Heart left ventricle (tissue), 16 donors: ENCODE measurements at regions of chr11 and their contacts with region 1.

Region 1: DNA sequence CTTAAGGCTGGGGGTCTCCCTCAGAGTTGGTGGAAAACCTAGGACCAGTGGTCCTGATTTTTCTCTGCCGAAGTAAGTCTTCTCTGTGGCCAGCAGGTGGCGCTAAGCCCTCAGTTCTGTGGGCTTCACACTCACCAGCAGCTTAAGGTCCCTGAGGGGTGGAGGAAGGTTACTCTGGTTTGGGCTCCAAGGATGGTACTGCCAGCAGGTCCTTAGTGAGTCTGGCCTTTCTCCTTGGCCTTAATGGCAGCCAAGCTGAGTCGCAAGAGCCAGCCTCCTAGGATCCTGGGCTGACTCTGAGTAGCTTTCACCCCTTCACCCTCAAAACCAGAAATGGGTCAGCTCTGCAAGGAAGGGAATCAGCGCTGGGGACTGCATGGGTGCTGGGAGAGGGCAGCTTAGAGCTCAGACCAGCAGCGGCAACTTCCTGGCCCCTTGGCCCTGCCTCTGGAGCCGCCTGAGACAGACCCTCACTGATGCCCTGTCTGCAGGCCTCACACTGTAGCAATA is 4.4 kb downstream of the KCNJ11 start:
- DNase-seq: peak; percentile 76 to 90 (median 84)
- ATAC-seq: peak in 3 of 4 donors; percentile 23 to 49 (median 48)
- H3K4me3 ChIP-seq: no peak overlapping the region
- H3K27ac ChIP-seq: no peak overlapping the region
- H3K4me1 ChIP-seq: peaks cover 0 to 31% (median 7%) of the 10 kb centered on the region in 12 donors
- H3K27me3 ChIP-seq: peaks cover 0 to 15% (median 0%) of the 10 kb centered on the region in 9 donors
- CTCF ChIP-seq: peak; percentile 84 to 95 (median 90)
- POLR2A ChIP-seq: no peak

Region 2: GRCh38 chr11:17230867-17231851 is 152.9 kb before region 1 on chr11:
- intact Hi-C with region 1: loop called in 1 of 10 experiments (anchors 5 kb)
- DNase-seq: no peak
- ATAC-seq: no peak
- H3K4me3 ChIP-seq: no peak overlapping the region
- H3K27ac ChIP-seq: no peak overlapping the region
- H3K4me1 ChIP-seq: peaks cover 0 to 7% (median 0%) of the 10 kb centered on the region in 12 donors
- H3K27me3 ChIP-seq: no peaks in the 10 kb centered on the region
- CTCF ChIP-seq: no peak
- POLR2A ChIP-seq: no peak

Region 3: GRCh38 chr11:17343907-17344306 is 40.1 kb before region 1 on chr11:
- intact Hi-C with region 1: no loop called
- DNase-seq: no peak
- ATAC-seq: no peak
- H3K4me3 ChIP-seq: no peak overlapping the region
- H3K27ac ChIP-seq: no peak overlapping the region
- H3K4me1 ChIP-seq: no peaks in the 10 kb centered on the region
- H3K27me3 ChIP-seq: no peaks in the 10 kb centered on the region
- CTCF ChIP-seq: no peak
- POLR2A ChIP-seq: no peak

Region 4: DNA sequence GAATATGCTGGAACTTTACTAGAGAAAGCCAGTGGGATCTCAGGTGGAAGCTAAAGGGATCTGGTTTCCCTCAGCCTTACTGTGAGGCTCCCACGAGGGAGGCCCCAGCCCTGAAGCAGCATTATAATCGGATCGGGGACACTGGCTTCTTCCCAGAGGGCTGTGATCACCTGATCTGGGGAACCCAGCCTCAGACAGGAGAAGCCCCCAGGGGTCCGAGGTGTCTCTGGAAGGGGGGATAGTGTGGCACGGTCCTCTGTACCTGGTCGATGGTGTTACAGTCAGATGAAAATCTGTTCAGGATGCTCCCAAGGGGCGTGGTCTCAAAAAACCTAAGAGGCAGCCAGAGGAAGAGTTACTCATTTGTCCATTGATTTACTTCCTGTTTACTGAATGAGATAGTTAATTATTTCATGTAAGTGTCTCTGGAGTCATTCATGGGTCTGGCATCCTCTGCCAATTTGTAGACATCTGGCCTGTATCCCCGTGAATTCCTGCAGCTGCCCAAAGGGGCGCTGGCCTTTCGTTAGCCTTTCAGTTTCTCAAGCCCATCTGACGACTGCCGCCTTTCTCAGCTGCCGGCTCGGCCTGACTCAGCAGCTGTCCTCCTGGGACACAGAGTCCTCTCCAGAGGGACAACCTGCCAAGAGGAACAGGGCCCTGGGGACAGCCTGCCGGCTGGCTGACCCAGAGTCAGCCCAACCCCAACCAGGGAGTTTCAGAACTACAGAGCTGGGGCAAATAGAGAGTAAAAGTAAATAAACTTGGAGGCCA is 21.4 kb after region 1 on chr11:
- intact Hi-C with region 1: loop called in 1 of 10 experiments (anchors 1 kb)
- DNase-seq: peak; percentile 71 to 93 (median 84)
- ATAC-seq: peak; percentile 95 to 98 (median 97)
- H3K4me3 ChIP-seq: peak overlapping the region in 2 of 12 donors; percentile 6 to 15
- H3K27ac ChIP-seq: peak overlapping the region; percentile 58 to 95 (median 78)
- H3K4me1 ChIP-seq: peaks cover 0 to 28% (median 18%) of the 10 kb centered on the region in 12 donors
- H3K27me3 ChIP-seq: no peaks in the 10 kb centered on the region
- CTCF ChIP-seq: peak in 8 of 12 donors; percentile 7 to 44 (median 34)
- POLR2A ChIP-seq: no peak

Region 5: GRCh38 chr11:17504330-17505107 is 120.5 kb after region 1 on chr11:
- intact Hi-C with region 1: loop called (anchors 1 to 2 kb)
- DNase-seq: peak; percentile 73 to 86 (median 77)
- ATAC-seq: peak; percentile 59 to 79 (median 71)
- H3K4me3 ChIP-seq: no peak overlapping the region
- H3K27ac ChIP-seq: no peak overlapping the region
- H3K4me1 ChIP-seq: peaks cover 0 to 19% (median 12%) of the 10 kb centered on the region in 12 donors
- H3K27me3 ChIP-seq: peaks cover 0 to 1% (median 0%) of the 10 kb centered on the region in 9 donors
- CTCF ChIP-seq: peak; percentile 80 to 94 (median 90)
- POLR2A ChIP-seq: no peak

Region 6: GRCh38 chr11:17528181-17528691 is 144.2 kb after region 1 on chr11:
- intact Hi-C with region 1: loop called in 5 of 10 experiments (anchors 1 to 5 kb)
- DNase-seq: peak in 4 of 5 donors; percentile 31 to 57 (median 50)
- ATAC-seq: peak; percentile 32 to 82 (median 72)
- H3K4me3 ChIP-seq: no peak overlapping the region
- H3K27ac ChIP-seq: no peak overlapping the region
- H3K4me1 ChIP-seq: peaks cover 0 to 19% (median 1%) of the 10 kb centered on the region in 12 donors
- H3K27me3 ChIP-seq: no peaks in the 10 kb centered on the region
- CTCF ChIP-seq: peak; percentile 50 to 75 (median 69)
- POLR2A ChIP-seq: no peak